ENCODE measurements at regions of chr17 and their contacts with region 1.

Region 1: DNA sequence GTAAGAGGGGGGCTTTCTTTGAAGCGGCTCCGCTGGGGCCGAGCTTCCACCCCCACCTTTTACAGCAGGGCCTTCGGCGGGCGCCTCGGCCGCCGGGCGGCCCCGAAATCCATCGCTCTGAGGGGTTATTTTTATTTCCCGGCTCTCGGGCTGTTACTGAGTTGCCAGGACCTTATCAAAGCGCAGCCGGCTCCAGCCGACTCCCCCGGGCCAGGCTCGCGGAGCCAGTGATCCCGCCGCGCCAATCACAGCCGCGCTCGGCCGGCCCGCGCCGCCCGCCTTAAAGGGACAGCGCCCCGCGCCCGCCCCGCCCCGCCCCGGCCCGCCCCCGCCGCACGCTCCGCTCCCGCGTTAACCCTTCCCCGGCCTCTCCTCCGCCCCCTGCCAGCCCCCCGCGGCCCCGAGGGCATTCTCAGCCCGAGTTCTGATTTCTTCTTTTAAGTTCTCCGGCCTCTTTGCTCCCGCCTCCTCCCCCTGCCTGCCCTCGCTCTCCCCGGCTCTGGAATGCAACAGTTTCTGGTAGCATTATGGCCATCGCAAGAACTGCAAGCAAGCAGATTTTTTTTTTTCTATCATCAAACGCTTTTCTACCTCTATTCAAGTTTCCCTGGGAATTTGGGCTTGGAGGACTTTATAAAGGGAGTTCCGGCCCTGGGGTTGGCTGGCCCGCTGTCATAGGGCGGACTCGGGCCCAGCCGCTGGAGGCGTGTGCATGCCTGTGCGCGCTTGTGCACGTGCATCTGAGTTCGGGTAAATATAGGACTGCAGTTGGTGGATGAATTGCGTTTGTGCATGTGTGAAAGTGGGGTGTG is at the start of gene AXIN2:
- DNase-seq: peak; percentile 91 to 95 (median 94)
- H3K4me3 ChIP-seq: peak within 1 kb of the TSS in 3 of 4 donors; percentile 15 to 89 (median 33)
- H3K27ac ChIP-seq: peak within 1 kb of the TSS; percentile 69 to 98 (median 86)
- H3K4me1 ChIP-seq: peaks cover 25 to 42% of the 10 kb centered on the region in 2 donors
- H3K27me3 ChIP-seq: no peaks in the 10 kb centered on the region
- CTCF ChIP-seq: peak in 4 of 6 experiments; percentile 23 to 62 (median 52)
- POLR2A ChIP-seq: peak in 1 of 2 donors; percentile 53
- total RNA-seq, gene AXIN2: 10.9 to 47.3 (median 26.9) TPM

Region 2: DNA sequence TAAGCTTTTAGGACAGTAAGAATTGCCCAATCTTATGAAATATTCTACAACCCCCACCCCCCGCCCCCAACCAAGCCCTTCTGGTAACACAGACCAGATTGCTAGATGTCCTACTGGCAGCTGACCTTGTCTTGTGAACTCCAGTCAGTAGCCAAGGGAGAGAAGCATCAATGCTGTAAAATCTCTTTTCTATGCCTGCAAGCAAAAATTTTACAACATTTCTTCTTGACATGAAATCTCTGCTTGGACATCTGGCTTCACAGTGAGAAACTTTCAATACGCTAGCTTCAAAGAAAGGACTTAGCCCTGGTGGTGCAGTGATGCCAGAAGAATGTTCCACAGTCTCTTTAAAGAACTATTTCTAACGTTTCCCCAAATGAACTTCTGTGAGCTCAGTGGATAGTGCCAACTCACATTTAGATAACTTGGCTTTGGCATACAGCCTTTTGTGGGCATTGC is 169.1 kb after region 1 on chr17:
- intact Hi-C with region 1: loop called in 1 of 2 experiments (anchors 10 kb)
- DNase-seq: peak in 6 of 7 donors; percentile 21 to 69 (median 44)
- H3K4me3 ChIP-seq: no peak overlapping the region
- H3K27ac ChIP-seq: peak overlapping the region in 3 of 5 donors; percentile 34 to 65 (median 50)
- H3K4me1 ChIP-seq: peaks cover 15 to 17% of the 10 kb centered on the region in 2 donors
- H3K27me3 ChIP-seq: no peaks in the 10 kb centered on the region
- CTCF ChIP-seq: peak in 1 of 6 experiments; percentile 10
- POLR2A ChIP-seq: peak in 1 of 2 donors; percentile 6

Measured in adrenal gland (tissue), 19 donors.